ENCODE measurements at regions of chr5 and their contacts with region 1.

Region 1: DNA sequence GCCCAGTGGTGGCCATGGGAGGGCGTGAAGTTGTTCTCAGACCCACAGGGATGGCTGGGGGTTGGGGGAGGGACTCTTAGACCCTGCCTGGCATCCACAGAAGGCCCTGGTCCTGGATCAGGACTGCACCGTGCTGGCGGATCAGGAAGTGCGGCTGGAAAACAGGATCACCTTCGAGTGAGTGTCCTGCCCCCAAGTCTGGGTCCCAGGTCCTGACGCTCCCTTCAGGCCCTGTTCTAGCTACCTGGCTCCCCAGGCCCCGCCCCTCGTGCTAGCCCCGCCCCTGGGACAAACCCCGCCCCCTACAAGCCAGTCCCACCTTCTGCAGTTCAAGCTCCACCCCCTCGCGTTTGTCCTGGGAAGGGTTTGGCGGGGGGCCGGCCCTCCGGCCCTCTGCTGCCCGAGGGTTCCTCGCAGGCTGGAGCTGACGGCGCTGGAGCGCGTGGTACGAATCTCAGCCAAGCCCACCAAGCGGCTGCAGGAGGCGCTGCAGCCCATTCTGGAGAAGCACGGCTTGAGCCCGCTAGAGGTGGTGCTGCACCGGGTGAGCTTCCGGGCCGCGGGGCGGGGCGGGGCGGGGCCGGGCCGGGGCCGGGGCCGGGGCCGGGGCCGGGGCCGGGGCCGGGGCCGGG is 12.9 kb downstream of the RGS14 start:
- DNase-seq: peak; percentile 96
- H3K4me3 Mint-ChIP-seq: peak overlapping the region; percentile 76
- H3K27ac Mint-ChIP-seq: no peak overlapping the region
- H3K4me1 Mint-ChIP-seq: peaks cover 24% of the 10 kb centered on the region
- H3K27me3 Mint-ChIP-seq: no peaks in the 10 kb centered on the region
- CTCF ChIP-seq: peak; percentile 60

Region 2: DNA sequence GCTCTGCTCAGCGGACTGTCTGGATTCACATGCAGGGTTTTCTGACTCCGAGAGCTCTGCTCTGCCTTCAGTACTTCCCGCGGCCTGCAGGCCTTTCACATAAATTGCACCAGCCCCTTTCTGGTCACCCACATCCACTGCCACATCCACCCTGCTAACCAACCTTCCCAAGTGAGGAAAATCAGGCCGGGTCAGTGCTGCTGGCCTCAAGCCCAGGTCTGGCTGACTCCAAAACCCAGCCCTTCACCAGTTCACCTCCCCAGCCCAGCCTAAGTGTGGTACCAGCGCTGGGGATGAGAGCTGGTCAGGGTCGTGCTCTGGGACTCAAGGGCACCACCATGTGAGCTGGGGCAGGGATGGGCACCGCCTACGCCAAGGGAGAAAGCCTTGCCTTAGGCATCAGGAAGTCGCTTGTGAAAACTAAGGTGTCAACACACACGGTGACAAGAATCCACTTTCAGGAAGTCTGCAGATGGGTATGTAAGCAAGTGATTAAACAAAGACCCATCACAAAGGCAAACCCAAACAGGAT is 31.4 kb before region 1 on chr5:
- CTCF ChIA-PET with region 1: interaction called, 10 read pairs
- POLR2A ChIA-PET with region 1: no interaction called
- intact Hi-C with region 1: no loop called
- DNase-seq: no peak
- H3K4me3 Mint-ChIP-seq: no peak overlapping the region
- H3K27ac Mint-ChIP-seq: peak overlapping the region; percentile 36
- H3K4me1 Mint-ChIP-seq: peaks cover 13% of the 10 kb centered on the region
- H3K27me3 Mint-ChIP-seq: no peaks in the 10 kb centered on the region
- CTCF ChIP-seq: no peak